Colonic mucosa (tissue), 4 donors: ENCODE measurements at regions of chr5 and their contacts with region 1.

Region 1: GRCh38 chr5:34486160-34486848 is 169.8 kb upstream of the RAI14 start:
- DNase-seq: peak; percentile 87
- H3K4me3 ChIP-seq: no peak overlapping the region
- H3K27ac ChIP-seq: no peak overlapping the region
- H3K4me1 ChIP-seq: no peaks in the 10 kb centered on the region
- H3K27me3 ChIP-seq: no peaks in the 10 kb centered on the region
- CTCF ChIP-seq: peak; percentile 80

Region 2: GRCh38 chr5:34660444-34661112 is 174.3 kb after region 1 on chr5:
- intact Hi-C with region 1: no loop called
- DNase-seq: no peak
- H3K4me3 ChIP-seq: no peak overlapping the region
- H3K27ac ChIP-seq: no peak overlapping the region
- H3K4me1 ChIP-seq: peaks cover 6% of the 10 kb centered on the region
- H3K27me3 ChIP-seq: no peaks in the 10 kb centered on the region
- CTCF ChIP-seq: no peak

Region 3: GRCh38 chr5:34898258-34898895 is 412.1 kb after region 1 on chr5:
- intact Hi-C with region 1: loop called (anchors 2 kb)
- DNase-seq: peak; percentile 64
- H3K4me3 ChIP-seq: no peak overlapping the region
- H3K27ac ChIP-seq: no peak overlapping the region
- H3K4me1 ChIP-seq: no peaks in the 10 kb centered on the region
- H3K27me3 ChIP-seq: no peaks in the 10 kb centered on the region
- CTCF ChIP-seq: peak; percentile 83

Region 4: DNA sequence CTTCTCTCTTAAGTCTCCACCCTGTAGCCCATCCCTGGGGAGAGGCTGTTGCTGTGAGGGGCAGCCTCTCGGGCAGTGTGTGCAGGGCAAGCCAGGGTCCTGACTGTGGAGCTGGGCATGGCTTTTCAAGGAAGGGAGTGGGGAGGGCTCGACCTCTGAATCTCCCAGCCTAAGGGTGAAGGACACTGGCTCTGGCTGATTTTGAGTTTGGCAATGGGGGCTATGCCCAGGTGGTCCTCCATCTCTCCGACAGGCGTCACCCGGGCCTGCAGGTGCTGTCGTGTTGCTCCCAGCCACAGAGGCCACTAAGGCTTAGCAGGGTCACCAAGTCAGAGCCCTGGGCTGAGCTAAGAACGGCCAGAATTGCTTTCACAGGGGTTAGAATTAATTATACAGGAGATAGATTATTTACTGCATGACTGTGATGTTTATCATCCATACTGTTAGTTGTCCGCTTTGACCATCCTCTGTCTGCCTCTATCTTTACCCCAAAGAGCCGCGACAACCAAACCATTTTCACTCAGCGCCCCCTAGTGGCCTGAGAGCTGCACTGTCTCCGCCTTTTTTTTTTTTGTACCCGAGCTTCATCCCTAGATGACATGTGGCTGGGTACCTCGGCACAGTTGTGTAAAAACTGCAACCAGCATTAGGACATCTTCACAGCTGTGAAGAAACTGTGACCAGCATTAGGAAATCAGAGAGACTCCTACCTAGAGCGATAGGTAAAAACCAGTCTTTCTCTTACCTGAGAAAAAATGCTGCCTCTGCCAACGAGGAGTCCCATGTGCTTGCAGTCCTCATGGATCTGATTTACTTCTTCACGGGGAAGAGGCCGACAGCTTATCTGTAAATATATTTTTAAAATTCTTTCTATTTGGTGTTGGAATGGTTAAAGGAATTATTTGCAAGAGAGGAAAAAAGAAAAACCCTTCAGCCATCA is 517.0 kb after region 1 on chr5:
- intact Hi-C with region 1: loop called (anchors 5 kb)
- DNase-seq: peak; percentile 56
- H3K4me3 ChIP-seq: no peak overlapping the region
- H3K27ac ChIP-seq: no peak overlapping the region
- H3K4me1 ChIP-seq: no peaks in the 10 kb centered on the region
- H3K27me3 ChIP-seq: no peaks in the 10 kb centered on the region
- CTCF ChIP-seq: peak; percentile 76